ENCODE measurements at regions of chr3 and their contacts with region 1.

Region 1: GRCh38 chr3:174862143-174862542 is 3.0 kb downstream of the NAALADL2 start:
- DNase-seq: no peak
- H3K4me3 ChIP-seq: peak overlapping the region in 1 of 2 donors; percentile 14
- H3K27ac ChIP-seq: peak overlapping the region; percentile 73 to 75
- H3K4me1 ChIP-seq: peaks cover 0 to 6% of the 10 kb centered on the region in 2 donors
- H3K27me3 ChIP-seq: no peaks in the 10 kb centered on the region
- CTCF ChIP-seq: peak in 1 of 3 experiments; percentile 26

Region 2: GRCh38 chr3:174337227-174337626 is 524.9 kb before region 1 on chr3:
- intact Hi-C with region 1: no loop called
- DNase-seq: no peak
- H3K4me3 ChIP-seq: no peak overlapping the region
- H3K27ac ChIP-seq: no peak overlapping the region
- H3K4me1 ChIP-seq: no peaks in the 10 kb centered on the region
- H3K27me3 ChIP-seq: no peaks in the 10 kb centered on the region
- CTCF ChIP-seq: no peak

Region 3: DNA sequence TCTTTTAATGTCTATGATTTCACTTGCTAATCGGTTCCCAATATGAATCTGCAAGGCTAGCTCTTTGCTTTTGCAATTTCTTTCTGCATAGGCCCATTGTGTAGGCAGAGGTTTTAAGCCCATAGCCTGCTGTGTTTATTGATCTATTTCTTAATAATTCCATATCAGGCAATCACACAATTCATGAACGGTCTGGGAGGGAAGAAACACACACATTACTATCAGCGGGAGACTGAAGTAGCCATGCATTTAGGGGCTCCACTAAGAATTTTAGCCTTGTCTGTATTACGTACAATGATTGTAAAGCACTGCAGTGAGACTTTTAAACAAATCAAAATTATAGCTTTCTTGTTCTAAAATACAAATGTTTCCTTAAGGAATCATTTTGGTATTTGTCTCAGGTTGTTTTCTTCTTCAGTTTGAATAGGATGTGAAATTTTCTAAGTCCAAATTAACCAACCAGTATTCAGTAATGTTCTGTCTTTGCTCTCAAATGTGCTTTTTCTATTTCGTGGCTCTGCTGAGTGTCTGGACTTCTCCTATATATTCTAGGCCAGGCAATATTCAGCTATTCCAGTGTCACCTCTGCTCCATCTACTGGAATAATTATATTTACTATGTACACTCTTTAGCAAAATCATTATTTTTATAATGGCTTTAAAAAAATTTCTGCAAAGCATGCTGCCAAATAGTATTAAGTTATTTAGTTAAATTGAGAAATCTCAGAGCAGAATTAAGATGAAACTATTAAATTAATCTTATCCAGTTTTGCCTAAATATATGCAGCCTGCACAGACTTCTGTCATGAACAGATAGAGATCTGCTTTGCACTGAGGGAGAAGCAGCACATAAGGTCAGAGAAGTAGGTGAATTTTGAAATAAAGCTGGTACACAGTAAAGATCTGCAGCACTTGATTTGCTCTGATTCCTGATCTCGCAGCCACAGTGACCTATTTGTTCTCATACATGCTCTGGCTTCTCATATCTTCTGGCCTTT is 106.0 kb before region 1 on chr3:
- intact Hi-C with region 1: no loop called
- DNase-seq: no peak
- H3K4me3 ChIP-seq: no peak overlapping the region
- H3K27ac ChIP-seq: no peak overlapping the region
- H3K4me1 ChIP-seq: no peaks in the 10 kb centered on the region
- H3K27me3 ChIP-seq: no peaks in the 10 kb centered on the region
- CTCF ChIP-seq: no peak

Region 4: DNA sequence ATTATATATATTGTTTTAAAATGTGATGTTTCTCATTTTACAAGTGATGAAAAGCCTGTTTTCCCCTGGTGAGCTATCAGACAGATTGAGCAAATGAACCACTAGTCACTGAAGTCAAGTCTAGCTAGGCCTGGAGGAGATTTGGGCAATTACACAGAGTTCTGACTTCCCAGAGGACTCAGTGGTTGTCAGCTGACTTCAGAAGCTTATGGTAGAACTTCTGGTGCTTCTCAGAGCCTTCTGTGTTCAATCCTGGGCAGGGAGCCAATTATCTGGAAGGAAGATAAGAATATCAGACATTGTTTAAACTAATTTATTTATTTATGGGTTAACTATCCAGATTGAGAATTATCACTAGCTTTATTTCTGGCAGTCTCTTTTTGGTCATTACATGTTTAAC is 40.7 kb before region 1 on chr3:
- intact Hi-C with region 1: loop called (anchors 5 kb)
- DNase-seq: no peak
- H3K4me3 ChIP-seq: no peak overlapping the region
- H3K27ac ChIP-seq: peak overlapping the region; percentile 42 to 82
- H3K4me1 ChIP-seq: peaks cover 0 to 3% of the 10 kb centered on the region in 2 donors
- H3K27me3 ChIP-seq: no peaks in the 10 kb centered on the region
- CTCF ChIP-seq: no peak

Region 5: DNA sequence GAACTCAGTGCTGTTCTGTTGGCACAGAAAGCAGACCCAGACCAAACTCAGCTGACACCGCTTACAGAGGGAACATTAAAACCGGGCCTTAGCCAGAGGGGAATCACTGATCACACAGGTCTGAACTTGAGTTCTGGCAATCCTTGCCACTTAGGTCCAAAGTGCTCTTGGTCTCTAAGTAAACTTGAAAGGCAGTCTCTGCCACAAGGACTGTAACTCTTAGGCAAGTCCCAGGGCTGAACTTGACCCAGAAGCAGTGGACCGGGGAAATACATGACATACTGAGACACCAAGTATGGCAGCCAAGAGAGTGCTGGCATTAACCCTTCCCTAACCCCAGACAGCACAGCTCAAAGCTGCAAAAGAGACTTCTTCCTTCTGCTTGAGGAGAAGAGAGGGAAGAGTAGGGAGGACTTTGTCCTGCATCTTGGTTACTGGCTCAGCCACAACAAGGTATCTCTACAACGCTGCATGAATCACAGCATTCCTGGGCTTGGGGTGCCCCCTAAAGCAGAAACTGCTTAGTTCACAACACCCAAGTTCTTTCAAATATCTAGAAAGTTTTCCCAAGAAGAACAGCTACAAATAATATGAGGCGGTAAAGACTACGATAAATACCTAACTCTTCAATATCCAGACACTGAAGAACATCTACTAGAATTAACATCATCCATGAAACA is 29.5 kb after region 1 on chr3:
- intact Hi-C with region 1: no loop called
- DNase-seq: no peak
- H3K4me3 ChIP-seq: no peak overlapping the region
- H3K27ac ChIP-seq: no peak overlapping the region
- H3K4me1 ChIP-seq: no peaks in the 10 kb centered on the region
- H3K27me3 ChIP-seq: no peaks in the 10 kb centered on the region
- CTCF ChIP-seq: no peak

Region 6: GRCh38 chr3:174955513-174956001 is 93.4 kb after region 1 on chr3:
- intact Hi-C with region 1: loop called (anchors 5 kb)
- DNase-seq: no peak
- H3K4me3 ChIP-seq: no peak overlapping the region
- H3K27ac ChIP-seq: no peak overlapping the region
- H3K4me1 ChIP-seq: peaks cover 3 to 20% of the 10 kb centered on the region in 2 donors
- H3K27me3 ChIP-seq: no peaks in the 10 kb centered on the region
- CTCF ChIP-seq: no peak

Measured in ascending aorta (tissue), 2 donors.